Transverse colon (tissue), 4 donors: ENCODE measurements at regions of chr7 and their contacts with region 1.

Region 1: GRCh38 chr7:53431901-53432300 is 396.5 kb downstream of the POM121L12 start:
- DNase-seq: no peak
- H3K4me3 ChIP-seq: no peak overlapping the region
- H3K27ac ChIP-seq: no peak overlapping the region
- H3K4me1 ChIP-seq: no peaks in the 10 kb centered on the region
- H3K27me3 ChIP-seq: no peaks in the 10 kb centered on the region
- CTCF ChIP-seq: no peak
- EP300 ChIP-seq: no peak
- POLR2A ChIP-seq: no peak

Region 2: GRCh38 chr7:53656881-53657280 is 225.0 kb after region 1 on chr7:
- in situ Hi-C with region 1: no loop called
- intact Hi-C with region 1: loop called (anchors 5 kb)
- DNase-seq: no peak
- H3K4me3 ChIP-seq: no peak overlapping the region
- H3K27ac ChIP-seq: no peak overlapping the region
- H3K4me1 ChIP-seq: no peaks in the 10 kb centered on the region
- H3K27me3 ChIP-seq: no peaks in the 10 kb centered on the region
- CTCF ChIP-seq: no peak
- EP300 ChIP-seq: no peak
- POLR2A ChIP-seq: no peak